ENCODE measurements at regions of chr14 and their contacts with region 1.

Region 1: DNA sequence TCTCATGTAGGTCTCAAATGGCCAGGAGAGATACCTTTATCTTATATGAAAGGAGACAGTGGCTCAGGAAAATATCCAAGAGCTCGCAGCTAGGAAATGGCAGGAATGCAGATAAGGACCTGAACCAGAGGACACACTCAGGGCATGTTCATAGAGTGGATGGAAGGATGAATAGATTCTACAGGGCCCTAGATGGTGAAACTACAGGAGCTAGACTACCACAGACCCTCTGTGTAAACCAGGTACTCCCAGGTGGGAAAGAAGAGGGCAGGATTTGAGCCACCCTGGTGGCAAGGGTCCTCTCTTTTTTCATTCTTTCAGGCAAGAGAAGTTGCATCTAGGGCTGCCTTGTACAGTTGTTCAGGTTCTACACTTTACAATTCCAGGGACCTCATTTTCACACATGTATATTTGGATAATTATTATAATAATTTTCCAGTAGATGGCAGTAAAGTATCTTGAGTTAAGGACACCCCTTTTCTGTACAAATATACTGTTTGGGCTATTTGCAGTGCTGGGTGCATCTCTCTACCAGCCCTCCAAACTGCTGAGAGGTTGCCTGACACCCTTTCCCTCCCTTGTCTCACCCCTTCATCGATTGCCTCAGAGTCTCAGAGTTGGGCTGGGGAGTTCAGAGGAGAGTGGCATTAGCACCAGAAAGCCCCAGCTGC is 10.5 kb upstream of the ZDHHC22 start:
- DNase-seq: peak; percentile 28
- ATAC-seq: peak; percentile 76
- H3K4me3 ChIP-seq: no peak overlapping the region
- H3K27ac ChIP-seq: no peak overlapping the region
- H3K4me1 ChIP-seq: peaks cover 0 to 14% of the 10 kb centered on the region in 2 experiments; a peak in 2 of 4 replicates
- H3K27me3 ChIP-seq: no peaks in the 10 kb centered on the region; the same call in 1 of the 2 replicates
- CTCF ChIP-seq: peak; percentile 7 to 62 (median 42); a peak in 3 of 6 replicates
- POLR2A ChIP-seq: no peak
- RAD21 ChIP-seq: peak; percentile 79

Region 2: GRCh38 chr14:77141214-77142004 is 10.6 kb before region 1 on chr14 and contains the start of gene ZDHHC22:
- CTCF ChIA-PET with region 1: interaction called, 10 read pairs
- POLR2A ChIA-PET with region 1: no interaction called
- RAD21 ChIA-PET with region 1: no interaction called
- intact Hi-C with region 1: no loop called
- DNase-seq: no peak
- ATAC-seq: peak; percentile 71
- H3K4me3 ChIP-seq: peak within 1 kb of the TSS; percentile 30 to 62
- H3K27ac ChIP-seq: no peak within 1 kb of the TSS
- H3K4me1 ChIP-seq: peaks cover 7 to 21% of the 10 kb centered on the region in 2 experiments; a peak in 3 of 4 replicates
- H3K27me3 ChIP-seq: peaks cover 10% of the 10 kb centered on the region; the same call in 1 of the 2 replicates
- CTCF ChIP-seq: peak in 2 of 3 experiments; percentile 28 to 47; a peak in 4 of 6 replicates
- POLR2A ChIP-seq: no peak
- RAD21 ChIP-seq: 0 out of 2 replicates have a peak, but pooled peaks have one; percentile 3
- total RNA-seq, gene ZDHHC22: 0.10 TPM

Region 3: GRCh38 chr14:77212943-77213678 is 61.1 kb after region 1 on chr14:
- CTCF ChIA-PET with region 1: interaction called, 66 read pairs
- POLR2A ChIA-PET with region 1: interaction called, 3 read pairs
- RAD21 ChIA-PET with region 1: interaction called, 6 to 8 read pairs
- intact Hi-C with region 1: loop called (anchors 2 kb)
- DNase-seq: peak; percentile 28
- ATAC-seq: peak; percentile 99
- H3K4me3 ChIP-seq: no peak overlapping the region
- H3K27ac ChIP-seq: no peak overlapping the region
- H3K4me1 ChIP-seq: peaks cover 0 to 5% of the 10 kb centered on the region in 2 experiments; a peak in 2 of 4 replicates
- H3K27me3 ChIP-seq: no peaks in the 10 kb centered on the region
- CTCF ChIP-seq: peak; percentile 71 to 93 (median 83); a peak in 5 of 6 replicates
- POLR2A ChIP-seq: no peak
- RAD21 ChIP-seq: peak; percentile 82

Region 4: DNA sequence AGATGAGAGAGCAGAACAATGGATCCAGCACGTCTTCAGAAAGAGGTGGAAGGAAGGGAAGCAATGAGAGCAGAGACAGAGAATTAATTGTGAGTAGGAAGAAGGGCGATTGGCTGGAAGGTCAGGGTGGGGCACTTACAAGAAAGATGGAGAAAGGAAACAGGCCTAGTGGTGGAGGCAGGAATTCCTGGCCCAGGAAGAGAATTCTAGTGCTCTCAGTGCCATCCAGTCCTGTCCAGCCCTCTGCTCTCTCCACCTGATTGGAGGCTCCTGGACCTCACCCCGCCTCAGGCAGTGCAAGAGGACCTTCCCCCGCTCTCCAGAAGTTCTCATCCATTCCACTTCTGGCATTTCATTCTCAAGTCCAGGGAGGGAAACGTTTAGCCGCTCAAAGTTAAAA is 76.0 kb after region 1 on chr14:
- CTCF ChIA-PET with region 1: no interaction called
- POLR2A ChIA-PET with region 1: no interaction called
- RAD21 ChIA-PET with region 1: no interaction called
- intact Hi-C with region 1: no loop called
- DNase-seq: no peak
- ATAC-seq: peak; percentile 82
- H3K4me3 ChIP-seq: no peak overlapping the region
- H3K27ac ChIP-seq: no peak overlapping the region
- H3K4me1 ChIP-seq: 0 out of 4 replicates have a peak, but pooled peaks cover 0 to 3% of the 10 kb centered on the region in 2 experiments
- H3K27me3 ChIP-seq: no peaks in the 10 kb centered on the region
- CTCF ChIP-seq: 0 out of 6 replicates have a peak, but pooled peaks of 1 of the 3 experiments have one; percentile 10
- POLR2A ChIP-seq: no peak
- RAD21 ChIP-seq: no peak

Region 5: GRCh38 chr14:77314043-77314442 is 162.0 kb after region 1 on chr14:
- CTCF ChIA-PET with region 1: interaction called, 112 read pairs
- POLR2A ChIA-PET with region 1: interaction called, 12 read pairs
- RAD21 ChIA-PET with region 1: interaction called, 10 to 14 read pairs
- intact Hi-C with region 1: loop called (anchors 1 kb)
- DNase-seq: no peak
- ATAC-seq: no peak
- H3K4me3 ChIP-seq: no peak overlapping the region
- H3K27ac ChIP-seq: no peak overlapping the region
- H3K4me1 ChIP-seq: peaks cover 0 to 5% of the 10 kb centered on the region in 2 experiments; a peak in 1 of 4 replicates
- H3K27me3 ChIP-seq: no peaks in the 10 kb centered on the region
- CTCF ChIP-seq: no peak
- POLR2A ChIP-seq: no peak
- RAD21 ChIP-seq: no peak

Region 6: DNA sequence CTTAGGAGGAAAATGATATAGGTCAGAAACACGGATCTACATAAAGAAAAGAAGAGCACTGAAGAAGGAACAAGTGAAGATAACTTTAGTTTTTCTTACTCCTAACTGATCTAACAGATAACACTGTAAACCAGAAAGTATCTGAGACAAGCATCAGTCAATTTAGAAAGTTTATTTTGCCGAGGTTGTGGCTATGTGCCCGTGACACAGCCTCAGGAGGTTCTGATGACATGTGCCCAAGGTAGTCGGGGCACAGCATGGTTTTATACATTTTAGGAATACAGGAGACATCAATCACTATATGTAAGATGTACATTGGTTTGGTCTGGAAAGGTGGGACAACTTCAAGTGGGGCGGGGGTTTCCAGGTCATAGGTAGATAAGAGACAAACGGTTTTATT is 248.2 kb after region 1 on chr14:
- CTCF ChIA-PET with region 1: no interaction called
- POLR2A ChIA-PET with region 1: no interaction called
- RAD21 ChIA-PET with region 1: no interaction called
- intact Hi-C with region 1: no loop called
- DNase-seq: no peak
- ATAC-seq: no peak
- H3K4me3 ChIP-seq: no peak overlapping the region
- H3K27ac ChIP-seq: no peak overlapping the region
- H3K4me1 ChIP-seq: no peaks in the 10 kb centered on the region
- H3K27me3 ChIP-seq: no peaks in the 10 kb centered on the region
- CTCF ChIP-seq: no peak
- POLR2A ChIP-seq: no peak
- RAD21 ChIP-seq: no peak

Region 7: DNA sequence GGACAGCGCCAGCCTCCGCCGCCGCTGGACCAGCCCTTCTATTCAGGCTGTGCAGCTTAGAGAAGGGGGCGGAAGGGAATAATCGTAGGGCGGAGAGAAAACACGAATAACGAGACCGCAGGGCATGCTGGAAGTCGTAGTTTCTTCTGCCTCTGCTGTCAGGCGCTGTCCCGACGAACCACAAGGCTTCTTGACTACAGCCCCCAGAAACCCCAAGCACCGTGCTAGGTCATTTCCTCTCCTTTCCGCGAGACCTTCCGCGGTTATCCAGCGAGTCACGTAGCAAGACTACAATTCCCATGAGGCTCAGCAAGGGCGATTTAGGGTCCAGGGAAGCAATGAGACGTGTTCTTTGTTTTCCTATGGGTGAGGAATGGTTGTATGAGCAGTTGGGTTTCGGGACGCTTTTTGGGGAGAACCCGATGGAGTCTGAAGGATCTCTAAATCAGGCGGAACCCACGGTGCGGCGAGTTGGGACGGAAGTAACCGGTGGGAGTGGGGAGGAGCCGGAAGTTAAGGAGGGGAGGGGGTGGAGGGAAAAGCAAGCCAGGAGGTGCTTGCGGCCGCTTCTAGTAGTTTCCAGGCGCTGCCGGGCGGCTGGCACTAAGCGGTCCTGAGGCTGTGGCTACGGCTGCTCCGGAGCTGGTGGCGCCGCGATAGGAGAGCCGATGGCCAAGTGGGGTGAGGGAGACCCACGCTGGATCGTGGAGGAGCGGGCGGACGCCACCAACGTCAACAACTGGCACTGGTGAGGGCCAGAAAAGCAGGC is 305.7 kb after region 1 on chr14 and contains the starts of genes AHSA1 and VIPAS39:
- CTCF ChIA-PET with region 1: interaction called, 3 read pairs
- POLR2A ChIA-PET with region 1: no interaction called
- RAD21 ChIA-PET with region 1: no interaction called
- intact Hi-C with region 1: loop called (anchors 2 kb)
- DNase-seq: peak; percentile 99
- ATAC-seq: peak; percentile 93
- H3K4me3 ChIP-seq: peak within 1 kb of the TSS; percentile 87 to 89
- H3K27ac ChIP-seq: peak within 1 kb of the TSS; percentile 81
- H3K4me1 ChIP-seq: peaks cover 6 to 15% of the 10 kb centered on the region in 2 experiments
- H3K27me3 ChIP-seq: no peaks in the 10 kb centered on the region
- CTCF ChIP-seq: 0 out of 6 replicates have a peak, but pooled peaks of 1 of the 3 experiments have one; percentile 2
- POLR2A ChIP-seq: peak; percentile 79
- RAD21 ChIP-seq: no peak
- total RNA-seq, gene AHSA1: 222 TPM
- total RNA-seq, gene VIPAS39: 16.8 TPM